Testis (tissue), 5 donors: ENCODE measurements at regions of chr22 and their contacts with region 1.

Region 1: DNA sequence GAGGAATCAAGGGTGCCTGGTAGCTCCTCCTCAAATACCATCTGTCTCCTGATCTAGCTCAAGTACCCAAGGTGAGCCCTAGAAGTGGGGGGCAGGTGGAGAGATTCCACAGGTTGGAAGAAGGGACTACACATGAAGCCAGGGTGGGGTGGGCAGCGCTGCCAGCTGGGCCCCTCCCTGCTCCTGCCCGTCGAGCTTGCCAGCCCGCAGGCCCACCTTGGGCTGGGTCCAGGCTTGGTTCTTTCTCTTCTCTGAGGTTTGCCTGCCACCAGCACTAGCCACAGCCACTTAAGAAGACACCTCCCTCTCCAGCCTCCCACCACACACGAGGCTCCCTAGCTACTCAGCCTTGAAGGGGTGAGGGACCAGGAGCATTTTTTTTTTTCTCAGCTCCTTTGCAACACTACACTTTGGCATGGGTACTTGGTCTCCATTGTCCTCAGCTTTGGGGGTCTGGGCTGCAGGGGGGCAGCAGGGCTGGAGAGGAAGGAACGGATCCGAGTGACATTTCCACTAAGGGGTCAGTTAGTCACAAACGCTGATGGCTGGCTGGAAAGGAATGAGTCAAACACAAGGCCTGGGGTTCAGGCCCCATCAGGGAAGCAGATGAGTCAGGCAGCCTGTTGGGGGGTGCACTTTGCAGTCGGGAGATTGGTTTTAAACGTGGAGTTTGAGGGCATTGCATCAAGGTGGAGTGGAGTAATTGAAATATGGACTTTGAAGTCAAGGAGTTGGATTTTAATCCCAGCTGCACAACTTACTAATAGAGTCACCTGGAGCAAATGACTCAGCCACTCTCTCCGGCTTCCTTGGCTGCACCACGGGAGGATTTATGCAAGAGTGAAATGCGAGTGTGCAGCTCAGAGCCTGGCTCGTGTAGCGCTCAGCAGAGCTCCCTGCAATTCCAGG is 7.4 kb upstream of the NPTXR start:
- DNase-seq: no peak
- H3K4me3 ChIP-seq: no peak overlapping the region
- H3K27ac ChIP-seq: no peak overlapping the region
- H3K4me1 ChIP-seq: no peaks in the 10 kb centered on the region
- H3K27me3 ChIP-seq: no peaks in the 10 kb centered on the region
- CTCF ChIP-seq: no peak
- POLR2A ChIP-seq: no peak

Region 2: GRCh38 chr22:38766076-38766777 is 85.0 kb before region 1 on chr22:
- intact Hi-C with region 1: loop called (anchors 10 kb)
- DNase-seq: peak; percentile 76
- H3K4me3 ChIP-seq: no peak overlapping the region
- H3K27ac ChIP-seq: no peak overlapping the region
- H3K4me1 ChIP-seq: no peaks in the 10 kb centered on the region
- H3K27me3 ChIP-seq: no peaks in the 10 kb centered on the region
- CTCF ChIP-seq: peak; percentile 25 to 68 (median 52)
- POLR2A ChIP-seq: no peak